Body of pancreas (tissue), 4 donors: ENCODE measurements at regions of chr2 and their contacts with region 1.

Region 1: GRCh38 chr2:158034199-158034866 is 67.3 kb upstream of the UPP2 start:
- DNase-seq: peak; percentile 59 to 79 (median 66)
- ATAC-seq: peak; percentile 81
- H3K4me3 ChIP-seq: no peak overlapping the region
- H3K27ac ChIP-seq: no peak overlapping the region
- H3K4me1 ChIP-seq: peaks cover 5% of the 10 kb centered on the region
- H3K27me3 ChIP-seq: no peaks in the 10 kb centered on the region
- CTCF ChIP-seq: peak; percentile 10 to 71 (median 61)
- POLR2A ChIP-seq: no peak

Region 2: GRCh38 chr2:158120664-158121641 is 86.6 kb after region 1 on chr2:
- intact Hi-C with region 1: loop called (anchors 10 kb)
- DNase-seq: no peak
- ATAC-seq: no peak
- H3K4me3 ChIP-seq: no peak overlapping the region
- H3K27ac ChIP-seq: no peak overlapping the region
- H3K4me1 ChIP-seq: no peaks in the 10 kb centered on the region
- H3K27me3 ChIP-seq: no peaks in the 10 kb centered on the region
- CTCF ChIP-seq: no peak
- POLR2A ChIP-seq: no peak

Region 3: GRCh38 chr2:158204741-158205165 is 170.4 kb after region 1 on chr2:
- intact Hi-C with region 1: no loop called
- DNase-seq: no peak
- ATAC-seq: no peak
- H3K4me3 ChIP-seq: no peak overlapping the region
- H3K27ac ChIP-seq: no peak overlapping the region
- H3K4me1 ChIP-seq: no peaks in the 10 kb centered on the region
- H3K27me3 ChIP-seq: no peaks in the 10 kb centered on the region
- CTCF ChIP-seq: no peak
- POLR2A ChIP-seq: no peak

Region 4: DNA sequence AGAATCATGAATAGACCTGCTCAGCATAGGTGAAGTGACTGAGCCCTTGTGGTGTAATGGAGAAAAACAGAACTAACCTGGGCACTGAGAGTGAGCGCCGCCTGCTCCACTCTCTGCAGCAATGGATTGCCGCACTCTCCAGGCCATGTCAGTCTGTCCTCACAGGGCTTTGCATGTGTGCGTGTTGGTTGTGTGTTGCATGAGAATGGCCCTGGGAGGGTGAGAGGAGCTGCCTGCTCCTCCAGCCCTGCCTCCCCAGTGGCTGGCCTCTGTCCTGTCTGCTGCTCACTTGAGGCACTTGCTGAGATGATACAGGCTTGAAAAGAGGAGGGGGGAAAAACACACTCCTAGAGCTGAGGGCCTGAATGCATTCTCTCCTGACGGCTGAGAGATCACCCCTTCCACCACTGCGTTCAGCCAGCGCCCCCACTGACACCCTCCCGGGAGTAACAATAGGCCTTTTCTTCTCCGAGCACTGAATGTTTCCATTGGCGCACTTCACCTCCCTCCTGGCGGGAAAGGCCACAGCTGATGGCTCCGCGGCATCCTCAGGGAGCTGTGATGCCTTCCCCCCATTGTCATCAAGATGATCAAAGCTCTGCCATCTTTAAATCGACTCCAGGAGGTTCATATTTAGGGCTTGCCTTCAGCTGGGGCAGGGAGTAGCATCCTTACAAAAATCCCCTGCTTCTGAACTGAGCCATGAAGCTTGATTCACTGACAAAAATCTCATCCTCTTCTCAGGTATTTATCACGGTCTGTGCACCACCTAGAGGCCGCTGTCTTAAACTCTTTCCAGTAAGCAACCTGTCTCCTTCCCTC is 710.9 kb after region 1 on chr2:
- intact Hi-C with region 1: loop called (anchors 5 kb)
- DNase-seq: peak; percentile 45 to 65 (median 54)
- ATAC-seq: peak; percentile 64
- H3K4me3 ChIP-seq: no peak overlapping the region
- H3K27ac ChIP-seq: no peak overlapping the region
- H3K4me1 ChIP-seq: no peaks in the 10 kb centered on the region
- H3K27me3 ChIP-seq: no peaks in the 10 kb centered on the region
- CTCF ChIP-seq: peak in 6 of 7 experiments; percentile 33 to 68 (median 58)
- POLR2A ChIP-seq: no peak